Activated CD4-positive, alpha-beta T cell treated with anti-CD3 and anti-CD28 coated beads for 36 hours (primary cell): ENCODE measurements at regions of chr10 and their contacts with region 1.

Region 1: DNA sequence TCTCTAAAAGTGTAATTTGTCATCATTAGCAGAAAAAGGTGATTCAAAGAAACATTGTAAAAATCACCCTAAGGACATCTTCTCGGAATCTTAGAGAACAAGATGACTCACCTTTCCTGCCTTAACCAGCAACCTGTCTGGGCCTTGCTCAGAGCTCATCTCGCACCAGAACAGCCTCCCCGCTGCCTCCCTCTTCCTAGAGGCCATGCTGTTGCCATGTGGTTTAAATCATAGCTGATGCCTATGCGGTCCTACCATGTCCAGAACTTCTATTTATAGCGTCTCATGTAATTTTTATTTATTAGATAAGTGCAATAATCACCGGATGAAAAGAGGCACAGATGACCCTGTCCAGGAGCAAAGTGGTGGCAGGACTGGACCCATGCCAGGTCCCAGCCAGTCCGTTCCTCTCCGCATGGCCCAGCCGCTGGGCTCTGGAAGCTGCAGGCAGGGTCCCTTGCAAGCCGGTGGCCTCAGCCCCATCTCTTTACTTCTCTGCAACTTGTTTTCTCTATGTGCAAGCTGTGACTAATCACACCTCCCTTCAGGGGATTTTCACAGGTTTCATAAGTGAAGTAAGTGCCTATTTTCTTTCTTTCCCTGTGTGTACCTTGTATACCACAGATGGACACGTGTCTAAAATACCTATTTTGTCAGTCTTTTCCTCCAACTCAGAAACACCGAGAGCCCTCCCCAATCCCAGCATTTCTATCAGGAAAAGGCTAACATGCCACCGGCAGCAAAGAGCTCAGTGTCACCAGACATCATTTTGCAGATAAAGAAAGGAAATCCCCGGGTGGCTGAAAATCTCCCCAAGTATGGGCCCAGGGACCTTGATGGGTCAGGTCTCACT is 27.1 kb downstream of the KLF6 start:
- DNase-seq: peak; percentile 80
- ATAC-seq: peak; percentile 80
- H3K4me3 Mint-ChIP-seq: peak overlapping the region; percentile 66
- H3K27ac Mint-ChIP-seq: peak overlapping the region; percentile 99
- H3K4me1 Mint-ChIP-seq: peaks cover 80% of the 10 kb centered on the region
- H3K27me3 Mint-ChIP-seq: no peaks in the 10 kb centered on the region

Region 2: GRCh38 chr10:3186368-3186767 is 571.5 kb before region 1 on chr10:
- CTCF ChIA-PET with region 1: no interaction called
- POLR2A ChIA-PET with region 1: no interaction called
- intact Hi-C with region 1: loop called in 1 of 2 experiments (anchors 5 kb)
- DNase-seq: peak; percentile 79
- ATAC-seq: peak; percentile 100
- H3K4me3 Mint-ChIP-seq: no peak overlapping the region
- H3K27ac Mint-ChIP-seq: no peak overlapping the region
- H3K4me1 Mint-ChIP-seq: peaks cover 20% of the 10 kb centered on the region
- H3K27me3 Mint-ChIP-seq: peaks cover 26% of the 10 kb centered on the region

Region 3: GRCh38 chr10:3623746-3624145 is 134.1 kb before region 1 on chr10:
- CTCF ChIA-PET with region 1: no interaction called
- POLR2A ChIA-PET with region 1: interaction called, 3 read pairs
- intact Hi-C with region 1: loop called in 1 of 2 experiments (anchors 2 kb)
- DNase-seq: no peak
- ATAC-seq: no peak
- H3K4me3 Mint-ChIP-seq: no peak overlapping the region
- H3K27ac Mint-ChIP-seq: peak overlapping the region; percentile 14
- H3K4me1 Mint-ChIP-seq: peaks cover 30% of the 10 kb centered on the region
- H3K27me3 Mint-ChIP-seq: no peaks in the 10 kb centered on the region

Region 4: DNA sequence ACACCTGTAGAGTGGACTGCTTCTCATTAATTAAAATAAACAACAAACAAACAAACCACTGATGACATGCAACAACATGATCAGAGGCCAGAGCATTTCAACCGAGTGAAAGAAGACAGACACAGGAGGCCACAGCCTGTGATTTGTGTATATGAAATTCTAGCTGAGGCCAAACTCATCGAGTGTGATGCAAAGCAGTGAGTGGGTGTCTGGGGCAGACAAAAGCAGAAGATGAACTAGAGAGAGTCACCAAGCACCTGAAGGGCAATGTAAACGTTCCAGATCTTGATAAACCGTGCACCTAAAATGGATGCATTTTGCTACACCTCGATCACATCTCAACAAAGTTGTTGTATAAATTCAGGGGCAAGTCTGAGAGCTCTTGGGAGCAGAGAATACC is 81.3 kb before region 1 on chr10:
- CTCF ChIA-PET with region 1: no interaction called
- POLR2A ChIA-PET with region 1: no interaction called
- intact Hi-C with region 1: no loop called
- DNase-seq: no peak
- ATAC-seq: no peak
- H3K4me3 Mint-ChIP-seq: no peak overlapping the region
- H3K27ac Mint-ChIP-seq: no peak overlapping the region
- H3K4me1 Mint-ChIP-seq: no peaks in the 10 kb centered on the region
- H3K27me3 Mint-ChIP-seq: no peaks in the 10 kb centered on the region

Region 5: GRCh38 chr10:3689871-3690510 is 67.9 kb before region 1 on chr10:
- CTCF ChIA-PET with region 1: no interaction called
- POLR2A ChIA-PET with region 1: no interaction called
- intact Hi-C with region 1: loop called in 1 of 2 experiments (anchors 5 kb)
- DNase-seq: peak; percentile 46
- ATAC-seq: peak; percentile 89
- H3K4me3 Mint-ChIP-seq: no peak overlapping the region
- H3K27ac Mint-ChIP-seq: peak overlapping the region; percentile 86
- H3K4me1 Mint-ChIP-seq: peaks cover 24% of the 10 kb centered on the region
- H3K27me3 Mint-ChIP-seq: no peaks in the 10 kb centered on the region

Region 6: DNA sequence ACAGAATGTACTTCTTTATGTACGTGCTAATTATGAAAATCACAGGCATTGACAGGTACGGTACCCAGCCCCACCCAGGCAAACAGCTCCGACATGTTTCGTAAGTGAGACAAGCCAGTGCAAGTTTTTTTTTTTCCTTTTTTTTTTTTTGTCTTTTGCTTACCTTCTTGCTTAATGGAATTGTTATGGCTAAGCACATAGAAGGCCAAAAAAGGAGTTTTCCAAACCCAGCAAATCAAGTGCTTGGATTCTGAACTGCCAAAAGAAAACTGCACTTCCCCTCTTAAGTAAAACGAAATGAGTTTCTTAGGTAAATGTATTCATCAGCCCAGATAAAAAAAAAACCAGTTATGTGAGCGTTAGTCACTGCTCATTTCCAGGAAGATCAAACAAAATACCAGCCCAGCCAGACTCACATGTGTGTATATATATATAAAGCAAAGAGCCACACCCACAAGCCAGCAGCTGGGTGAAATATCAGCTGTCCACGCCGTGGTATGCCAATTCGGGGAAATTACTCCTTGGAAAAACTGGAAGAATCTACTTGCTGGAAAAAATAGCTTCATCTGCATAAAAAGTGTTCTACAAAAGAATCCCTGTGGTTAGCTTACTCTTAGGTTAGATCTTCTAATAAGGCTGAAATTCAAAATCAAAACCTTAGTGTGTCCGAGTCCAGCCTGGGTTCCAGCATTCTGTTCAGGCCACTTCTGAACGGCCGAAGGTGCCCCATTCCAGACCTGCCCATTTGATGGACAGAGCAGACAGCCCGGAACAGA is 19.1 kb after region 1 on chr10:
- CTCF ChIA-PET with region 1: interaction called, 6 read pairs
- POLR2A ChIA-PET with region 1: interaction called, 23 read pairs
- intact Hi-C with region 1: loop called (anchors 1 kb)
- DNase-seq: peak; percentile 71
- ATAC-seq: peak; percentile 68
- H3K4me3 Mint-ChIP-seq: peak overlapping the region; percentile 62
- H3K27ac Mint-ChIP-seq: peak overlapping the region; percentile 90
- H3K4me1 Mint-ChIP-seq: peaks cover 67% of the 10 kb centered on the region
- H3K27me3 Mint-ChIP-seq: no peaks in the 10 kb centered on the region

Region 7: DNA sequence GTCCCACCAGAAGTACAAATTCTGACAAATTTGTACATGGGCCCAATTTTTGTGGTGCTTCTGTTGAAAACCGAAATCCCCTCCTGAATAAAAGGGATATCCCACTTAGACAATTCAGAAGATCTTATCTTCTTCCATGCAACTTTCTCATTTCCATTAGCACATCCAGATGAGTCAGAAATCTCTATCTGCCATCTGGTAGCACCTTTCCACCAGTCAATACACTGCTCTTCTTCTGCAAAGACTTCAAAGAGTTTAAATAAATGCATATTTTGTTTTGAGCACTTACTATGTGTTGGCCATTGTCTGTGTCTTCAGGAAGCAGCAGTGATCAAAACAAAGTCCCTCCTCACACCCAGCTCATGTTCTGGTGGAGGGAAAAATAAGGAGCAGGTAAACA is 39.9 kb after region 1 on chr10:
- CTCF ChIA-PET with region 1: no interaction called
- POLR2A ChIA-PET with region 1: no interaction called
- intact Hi-C with region 1: no loop called
- DNase-seq: no peak
- ATAC-seq: peak; percentile 85
- H3K4me3 Mint-ChIP-seq: peak overlapping the region; percentile 8
- H3K27ac Mint-ChIP-seq: peak overlapping the region; percentile 85
- H3K4me1 Mint-ChIP-seq: peaks cover 55% of the 10 kb centered on the region
- H3K27me3 Mint-ChIP-seq: no peaks in the 10 kb centered on the region

Region 8: GRCh38 chr10:3811291-3811870 is 53.5 kb after region 1 on chr10:
- CTCF ChIA-PET with region 1: interaction called, 3 read pairs
- POLR2A ChIA-PET with region 1: interaction called, 19 read pairs
- intact Hi-C with region 1: loop called (anchors 1 kb)
- DNase-seq: peak; percentile 78
- ATAC-seq: peak; percentile 62
- H3K4me3 Mint-ChIP-seq: peak overlapping the region; percentile 42
- H3K27ac Mint-ChIP-seq: no peak overlapping the region
- H3K4me1 Mint-ChIP-seq: peaks cover 80% of the 10 kb centered on the region
- H3K27me3 Mint-ChIP-seq: no peaks in the 10 kb centered on the region

Region 9: GRCh38 chr10:3935141-3935540 is 177.3 kb after region 1 on chr10:
- CTCF ChIA-PET with region 1: no interaction called
- POLR2A ChIA-PET with region 1: no interaction called
- intact Hi-C with region 1: loop called in 1 of 2 experiments (anchors 1 kb)
- DNase-seq: peak; percentile 89
- ATAC-seq: peak; percentile 98
- H3K4me3 Mint-ChIP-seq: peak overlapping the region; percentile 37
- H3K27ac Mint-ChIP-seq: peak overlapping the region; percentile 91
- H3K4me1 Mint-ChIP-seq: peaks cover 50% of the 10 kb centered on the region
- H3K27me3 Mint-ChIP-seq: no peaks in the 10 kb centered on the region

Region 10: GRCh38 chr10:4214908-4215307 is 457.0 kb after region 1 on chr10:
- CTCF ChIA-PET with region 1: no interaction called
- POLR2A ChIA-PET with region 1: no interaction called
- intact Hi-C with region 1: no loop called
- DNase-seq: no peak
- ATAC-seq: no peak
- H3K4me3 Mint-ChIP-seq: no peak overlapping the region
- H3K27ac Mint-ChIP-seq: no peak overlapping the region
- H3K4me1 Mint-ChIP-seq: peaks cover 9% of the 10 kb centered on the region
- H3K27me3 Mint-ChIP-seq: peaks cover 4% of the 10 kb centered on the region